ENCODE measurements at regions of chr17 and their contacts with region 1.

Region 1: GRCh38 chr17:3738562-3739295 is 15.0 kb downstream of the HASPIN start:
- DNase-seq: no peak
- CTCF ChIP-seq: no peak

Region 2: DNA sequence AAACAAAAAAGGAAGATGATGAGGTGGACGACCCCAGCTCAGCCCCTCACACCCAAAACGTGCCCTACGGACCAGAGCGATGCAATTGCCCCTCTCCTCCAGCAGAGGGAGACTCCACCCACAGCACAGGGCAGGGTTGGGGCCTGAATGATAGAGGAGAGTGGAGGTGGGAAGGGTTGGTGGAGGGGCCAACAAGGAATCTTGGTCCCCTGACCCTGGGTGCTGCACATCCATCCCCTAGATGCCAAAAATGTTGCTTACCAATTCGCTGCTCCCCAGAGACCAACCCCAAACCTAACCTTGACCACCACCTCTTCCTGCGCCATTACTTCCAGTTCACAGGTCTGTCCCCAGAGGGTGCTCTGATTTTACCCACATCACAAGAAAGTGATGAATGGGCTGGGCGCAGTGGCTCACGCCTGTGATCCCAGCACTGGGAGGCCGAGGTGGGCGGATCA is 55.6 kb before region 1 on chr17:
- in situ Hi-C with region 1: loop called (anchors 10 kb)
- DNase-seq: peak; percentile 89
- CTCF ChIP-seq: peak; percentile 93

Region 3: DNA sequence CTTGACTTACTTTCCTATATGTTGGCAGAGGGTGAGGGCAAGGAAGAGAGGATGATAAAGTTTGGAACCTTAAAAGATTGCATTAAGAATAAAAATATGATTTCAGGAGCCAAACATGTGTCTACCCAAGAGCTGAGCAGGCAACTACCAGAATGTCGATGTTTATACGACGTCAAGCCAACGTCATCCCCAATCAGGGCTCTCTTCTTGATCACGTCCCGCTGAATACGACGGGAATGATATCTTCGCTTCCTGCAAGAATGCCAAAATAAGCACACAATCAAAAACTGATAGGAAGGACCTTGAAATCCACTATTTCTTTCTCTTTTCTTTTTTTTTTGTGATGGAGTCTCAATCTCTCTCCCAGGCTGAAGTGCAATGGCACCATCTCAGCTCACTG is 82.4 kb after region 1 on chr17:
- in situ Hi-C with region 1: loop called (anchors 5 kb)
- DNase-seq: no peak
- CTCF ChIP-seq: no peak

Region 4: GRCh38 chr17:4433515-4434031 is 694.8 kb after region 1 on chr17 and contains the start of gene SPNS3:
- in situ Hi-C with region 1: no loop called
- DNase-seq: no peak
- CTCF ChIP-seq: no peak